ENCODE measurements at regions of chr18 and their contacts with region 1.

Region 1: DNA sequence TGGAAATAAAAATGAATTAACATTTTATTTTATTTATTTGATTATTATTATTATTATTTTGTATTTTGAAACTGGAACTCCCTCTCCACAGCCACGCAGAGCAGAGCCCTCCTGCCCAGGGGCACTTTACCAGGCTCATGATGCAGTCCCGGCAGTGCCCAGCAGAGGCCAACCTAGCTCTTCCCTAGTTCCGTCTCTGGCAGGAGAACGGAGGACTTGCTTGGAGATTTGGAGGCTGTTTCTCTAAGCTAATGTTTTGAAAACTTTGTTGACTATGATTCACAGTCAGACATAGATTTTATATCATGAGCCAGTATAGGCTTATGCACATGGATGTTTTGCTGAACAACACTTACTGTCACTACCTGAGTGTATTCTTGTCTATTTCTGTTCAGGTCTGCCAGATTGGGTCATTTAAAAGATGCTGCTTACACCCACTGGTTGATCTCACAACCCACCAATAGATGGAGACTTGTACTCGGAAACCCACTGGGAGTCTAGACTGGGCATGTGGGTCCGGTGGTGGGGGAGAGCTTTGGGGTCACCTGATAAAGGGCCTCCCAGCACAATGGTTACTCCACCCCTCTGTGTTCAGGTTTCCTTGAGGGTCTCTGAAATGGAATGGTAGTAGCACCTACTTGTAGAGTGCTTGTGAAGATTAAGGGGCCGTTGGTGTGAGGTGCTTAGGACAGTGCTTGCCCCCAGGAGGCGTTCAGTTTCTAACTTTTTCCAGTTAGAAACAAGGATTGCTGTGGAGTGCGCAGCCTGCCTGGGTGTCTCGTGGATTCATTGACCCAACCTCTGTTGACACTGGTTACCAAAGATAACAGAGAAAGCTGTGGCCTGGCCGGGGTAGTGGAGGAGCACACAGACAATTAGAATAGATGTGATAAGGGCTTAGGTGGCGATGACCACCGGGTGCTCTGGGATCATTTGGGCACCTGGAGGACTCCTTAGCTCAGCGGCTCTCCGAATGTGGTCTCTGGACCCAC is 177.3 kb downstream of the HAUS1 start:
- DNase-seq: peak; percentile 34
- ATAC-seq: peak; percentile 93
- H3K4me3 Mint-ChIP-seq: no peak overlapping the region
- H3K27ac Mint-ChIP-seq: no peak overlapping the region
- H3K4me1 Mint-ChIP-seq: peaks cover 4% of the 10 kb centered on the region
- H3K27me3 Mint-ChIP-seq: no peaks in the 10 kb centered on the region
- CTCF ChIP-seq: no peak

Region 2: GRCh38 chr18:46148810-46149209 is 132.7 kb before region 1 on chr18:
- CTCF ChIA-PET with region 1: interaction called, 6 read pairs
- POLR2A ChIA-PET with region 1: no interaction called
- intact Hi-C with region 1: loop called (anchors 1 kb)
- DNase-seq: no peak
- ATAC-seq: no peak
- H3K4me3 Mint-ChIP-seq: no peak overlapping the region
- H3K27ac Mint-ChIP-seq: no peak overlapping the region
- H3K4me1 Mint-ChIP-seq: no peaks in the 10 kb centered on the region
- H3K27me3 Mint-ChIP-seq: no peaks in the 10 kb centered on the region
- CTCF ChIP-seq: peak; percentile 59

Region 3: DNA sequence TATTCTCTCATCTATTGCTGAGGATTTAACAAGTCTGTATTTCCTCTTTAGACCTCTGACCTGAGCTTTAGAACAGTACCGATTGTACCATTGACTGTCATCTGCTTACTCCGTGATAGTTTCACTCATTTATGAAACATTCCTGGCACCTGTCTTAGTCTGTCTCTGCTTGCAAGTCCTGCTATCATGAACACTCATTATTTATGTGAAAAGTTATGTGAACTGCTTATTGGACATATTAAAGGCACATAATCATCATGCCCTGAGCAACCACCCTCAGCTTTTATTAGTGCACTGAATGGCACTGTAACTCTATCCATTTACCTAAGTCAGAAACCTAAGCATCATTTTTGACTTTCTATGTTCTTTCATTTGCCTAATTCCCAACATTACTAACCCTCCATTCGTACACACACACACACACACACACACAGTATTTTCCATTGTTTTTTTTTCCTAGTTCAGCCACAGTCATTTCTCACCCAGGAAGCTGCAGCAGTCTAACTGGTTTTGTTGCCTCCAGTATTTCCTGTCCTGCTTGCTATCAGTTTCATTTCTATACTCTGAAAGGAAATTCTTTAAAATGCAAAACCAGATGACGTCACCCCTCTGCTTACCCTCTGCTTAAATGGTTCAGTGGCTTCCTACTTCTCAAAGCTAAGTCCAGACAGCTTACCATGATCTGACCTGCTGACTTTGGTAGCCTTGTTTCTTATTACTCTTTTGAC is 31.2 kb before region 1 on chr18:
- CTCF ChIA-PET with region 1: interaction called, 6 read pairs
- POLR2A ChIA-PET with region 1: no interaction called
- intact Hi-C with region 1: loop called (anchors 2 kb)
- DNase-seq: no peak
- ATAC-seq: peak; percentile 94
- H3K4me3 Mint-ChIP-seq: peak overlapping the region; percentile 78
- H3K27ac Mint-ChIP-seq: peak overlapping the region; percentile 94
- H3K4me1 Mint-ChIP-seq: peaks cover 46% of the 10 kb centered on the region
- H3K27me3 Mint-ChIP-seq: no peaks in the 10 kb centered on the region
- CTCF ChIP-seq: no peak

Region 4: DNA sequence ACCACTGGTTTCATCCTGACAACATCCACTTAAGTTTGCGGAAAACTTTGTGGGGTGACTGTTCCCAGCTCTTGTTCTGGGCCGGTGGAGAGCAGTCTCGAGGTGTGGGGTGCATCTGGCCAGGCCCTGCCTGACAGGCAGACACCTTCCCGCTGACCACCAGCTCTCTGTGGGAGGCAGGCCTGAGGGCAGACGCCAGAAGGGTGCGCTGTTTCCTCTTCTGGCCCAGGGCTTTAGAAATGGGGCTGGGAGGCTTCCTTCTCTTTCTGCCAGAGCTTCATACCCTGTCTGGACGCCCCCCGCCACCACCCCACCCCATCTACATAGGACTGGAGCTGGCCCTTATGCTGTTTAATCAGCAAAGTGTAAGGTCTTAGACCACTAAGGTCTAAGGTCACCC is 111.7 kb after region 1 on chr18:
- CTCF ChIA-PET with region 1: no interaction called
- POLR2A ChIA-PET with region 1: no interaction called
- intact Hi-C with region 1: no loop called
- DNase-seq: no peak
- ATAC-seq: no peak
- H3K4me3 Mint-ChIP-seq: no peak overlapping the region
- H3K27ac Mint-ChIP-seq: no peak overlapping the region
- H3K4me1 Mint-ChIP-seq: no peaks in the 10 kb centered on the region
- H3K27me3 Mint-ChIP-seq: no peaks in the 10 kb centered on the region
- CTCF ChIP-seq: no peak

Region 5: GRCh38 chr18:46416706-46417638 is 135.5 kb after region 1 on chr18:
- CTCF ChIA-PET with region 1: no interaction called
- POLR2A ChIA-PET with region 1: no interaction called
- intact Hi-C with region 1: loop called (anchors 5 kb)
- DNase-seq: no peak
- ATAC-seq: no peak
- H3K4me3 Mint-ChIP-seq: no peak overlapping the region
- H3K27ac Mint-ChIP-seq: no peak overlapping the region
- H3K4me1 Mint-ChIP-seq: no peaks in the 10 kb centered on the region
- H3K27me3 Mint-ChIP-seq: no peaks in the 10 kb centered on the region
- CTCF ChIP-seq: no peak

Region 6: GRCh38 chr18:46481048-46481846 is 199.8 kb after region 1 on chr18:
- CTCF ChIA-PET with region 1: interaction called, 29 read pairs
- POLR2A ChIA-PET with region 1: no interaction called
- intact Hi-C with region 1: loop called (anchors 1 kb)
- DNase-seq: no peak
- ATAC-seq: peak; percentile 45
- H3K4me3 Mint-ChIP-seq: no peak overlapping the region
- H3K27ac Mint-ChIP-seq: no peak overlapping the region
- H3K4me1 Mint-ChIP-seq: no peaks in the 10 kb centered on the region
- H3K27me3 Mint-ChIP-seq: peaks cover 13% of the 10 kb centered on the region
- CTCF ChIP-seq: no peak

Region 7: DNA sequence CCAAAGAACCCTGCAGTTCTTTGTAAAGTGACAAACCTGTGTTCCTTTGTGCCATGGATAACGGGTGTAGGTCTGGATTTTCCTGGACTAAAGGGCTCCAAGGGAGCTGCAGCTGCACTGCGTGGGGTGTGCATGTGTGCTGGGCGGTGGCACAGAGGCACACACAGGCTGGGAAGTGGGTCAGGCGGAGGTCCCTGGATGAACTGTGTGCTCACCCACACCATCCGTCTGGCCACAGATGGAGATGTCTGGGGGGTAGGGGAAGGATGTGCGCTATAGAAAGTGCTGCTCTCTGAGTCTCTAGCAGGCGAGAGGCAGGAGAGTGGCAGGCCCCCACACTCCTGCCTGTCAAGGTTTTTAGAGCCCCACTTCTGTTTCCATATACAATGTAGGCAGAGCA is 238.4 kb after region 1 on chr18:
- CTCF ChIA-PET with region 1: no interaction called
- POLR2A ChIA-PET with region 1: no interaction called
- intact Hi-C with region 1: loop called (anchors 1 kb)
- DNase-seq: no peak
- ATAC-seq: no peak
- H3K4me3 Mint-ChIP-seq: no peak overlapping the region
- H3K27ac Mint-ChIP-seq: no peak overlapping the region
- H3K4me1 Mint-ChIP-seq: no peaks in the 10 kb centered on the region
- H3K27me3 Mint-ChIP-seq: peaks cover 2% of the 10 kb centered on the region
- CTCF ChIP-seq: no peak

Region 8: DNA sequence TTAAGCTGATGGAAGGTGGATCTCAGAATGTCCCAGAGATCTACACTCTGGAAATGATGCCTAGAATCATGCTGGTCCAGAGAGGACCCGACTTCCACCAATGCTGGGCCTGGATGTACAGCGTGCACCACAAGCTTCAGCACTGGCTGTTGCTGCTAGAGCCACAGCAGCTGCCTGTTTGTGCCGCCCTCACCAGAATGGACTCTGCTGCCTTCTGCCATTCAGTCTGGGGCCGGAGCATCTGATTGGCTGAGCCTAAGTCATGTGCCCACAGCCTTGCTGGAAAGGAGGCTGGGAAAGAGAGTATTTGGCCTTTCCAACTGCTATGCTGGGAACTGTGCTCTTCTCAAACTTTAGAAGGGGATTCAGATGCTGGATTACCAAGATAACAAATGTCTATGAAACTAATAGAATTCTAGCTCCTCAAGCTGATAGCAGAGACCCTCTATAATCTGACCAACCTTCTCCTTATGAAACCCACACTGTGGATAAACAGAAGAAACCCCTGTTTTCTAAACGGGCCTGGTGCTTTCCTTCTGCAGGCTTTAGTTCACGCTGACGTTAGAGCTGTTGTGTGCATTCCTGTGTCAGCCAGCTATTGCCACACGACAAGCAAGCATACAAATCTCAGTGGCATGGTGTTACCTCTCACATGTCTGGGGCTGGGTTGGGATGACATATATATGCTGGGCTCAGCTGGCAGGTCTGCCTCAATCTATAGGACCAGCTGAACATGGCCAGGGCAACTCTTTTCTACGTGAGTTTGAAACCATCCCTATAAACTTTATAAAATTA is 379.7 kb after region 1 on chr18:
- CTCF ChIA-PET with region 1: interaction called, 47 read pairs
- POLR2A ChIA-PET with region 1: no interaction called
- intact Hi-C with region 1: loop called (anchors 1 kb)
- DNase-seq: no peak
- ATAC-seq: no peak
- H3K4me3 Mint-ChIP-seq: no peak overlapping the region
- H3K27ac Mint-ChIP-seq: no peak overlapping the region
- H3K4me1 Mint-ChIP-seq: no peaks in the 10 kb centered on the region
- H3K27me3 Mint-ChIP-seq: peaks cover 3% of the 10 kb centered on the region
- CTCF ChIP-seq: no peak

Measured in activated B cell treated with CpG ODN at 0.5 μM for 24 hours (primary cell).